H1 (cell line): ENCODE measurements at regions of chr3 and their contacts with region 1.

Region 1: DNA sequence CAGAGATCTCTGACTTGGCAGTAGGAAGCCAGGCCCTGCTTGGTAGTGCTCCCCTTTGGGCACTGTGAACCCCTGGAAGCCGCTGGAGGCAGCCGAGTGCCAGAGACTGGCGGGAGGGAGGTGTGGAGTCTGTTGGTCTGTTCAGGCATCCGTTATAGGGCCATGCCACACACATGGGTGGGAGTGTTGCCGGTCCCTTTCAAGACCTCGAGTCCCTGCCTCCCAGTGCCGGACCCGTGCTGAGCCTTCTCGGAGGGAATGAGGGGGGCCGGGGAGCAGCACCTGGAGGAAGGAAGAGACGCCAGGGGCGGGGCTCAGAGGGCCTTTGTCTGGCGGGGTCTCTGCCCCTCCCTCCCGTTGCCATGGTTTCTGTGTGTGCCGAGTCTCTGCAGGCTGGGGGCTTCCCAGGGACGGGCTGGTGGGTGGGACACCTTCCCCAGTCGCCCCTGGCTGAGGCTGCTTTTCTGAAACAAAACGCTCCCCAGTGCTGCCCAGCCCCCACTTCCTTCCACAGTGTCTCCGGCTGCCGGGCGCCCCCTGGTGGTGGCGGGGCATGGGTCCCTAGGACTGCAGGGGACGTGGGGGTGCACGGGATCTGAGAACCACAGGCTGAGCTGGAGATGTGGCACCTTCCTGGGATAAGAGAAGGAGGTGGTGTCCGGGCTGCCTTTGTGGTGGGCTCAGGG is 10.0 kb downstream of the GNAI2 start:
- DNase-seq: peak in 1 of 2 experiments; percentile 99
- H3K4me3 ChIP-seq: peak overlapping the region in 2 of 4 experiments; percentile 23 to 27; a peak in 4 of 8 replicates
- H3K27ac ChIP-seq: peak overlapping the region; percentile 53
- H3K4me1 ChIP-seq: peaks cover 5 to 48% (median 41%) of the 10 kb centered on the region in 4 experiments
- H3K27me3 ChIP-seq: no peaks in the 10 kb centered on the region
- CTCF ChIP-seq: peak in 2 of 3 experiments; percentile 91 to 97; a peak in 3 of 4 replicates
- EP300 ChIP-seq: peak in 1 of 2 experiments; percentile 69; a peak in 1 of 3 replicates
- POLR2A ChIP-seq: no peak; a peak in 1 of 3 replicates
- RAD21 ChIP-seq: peak; percentile 75 to 91

Region 2: GRCh38 chr3:50272911-50273693 is 27.1 kb after region 1 on chr3:
- CTCF ChIA-PET with region 1: interaction called, 2,149 read pairs
- POLR2A ChIA-PET with region 1: interaction called, 8 read pairs
- DNase-seq: peak in 1 of 2 experiments; percentile 100
- H3K4me3 ChIP-seq: peak overlapping the region in 1 of 4 experiments; percentile 46; a peak in 1 of 8 replicates
- H3K27ac ChIP-seq: no peak overlapping the region
- H3K4me1 ChIP-seq: peaks cover 0 to 20% (median 19%) of the 10 kb centered on the region in 4 experiments; a peak in 6 of 7 replicates
- H3K27me3 ChIP-seq: peaks cover 27 to 50% (median 42%) of the 10 kb centered on the region in 4 experiments
- CTCF ChIP-seq: peak in 2 of 3 experiments; percentile 98 to 99; a peak in 3 of 4 replicates
- EP300 ChIP-seq: no peak
- POLR2A ChIP-seq: no peak
- RAD21 ChIP-seq: peak; percentile 99